Head of caudate nucleus (tissue), 42 donors: ENCODE measurements at regions of chr19 and their contacts with region 1.

Region 1: DNA sequence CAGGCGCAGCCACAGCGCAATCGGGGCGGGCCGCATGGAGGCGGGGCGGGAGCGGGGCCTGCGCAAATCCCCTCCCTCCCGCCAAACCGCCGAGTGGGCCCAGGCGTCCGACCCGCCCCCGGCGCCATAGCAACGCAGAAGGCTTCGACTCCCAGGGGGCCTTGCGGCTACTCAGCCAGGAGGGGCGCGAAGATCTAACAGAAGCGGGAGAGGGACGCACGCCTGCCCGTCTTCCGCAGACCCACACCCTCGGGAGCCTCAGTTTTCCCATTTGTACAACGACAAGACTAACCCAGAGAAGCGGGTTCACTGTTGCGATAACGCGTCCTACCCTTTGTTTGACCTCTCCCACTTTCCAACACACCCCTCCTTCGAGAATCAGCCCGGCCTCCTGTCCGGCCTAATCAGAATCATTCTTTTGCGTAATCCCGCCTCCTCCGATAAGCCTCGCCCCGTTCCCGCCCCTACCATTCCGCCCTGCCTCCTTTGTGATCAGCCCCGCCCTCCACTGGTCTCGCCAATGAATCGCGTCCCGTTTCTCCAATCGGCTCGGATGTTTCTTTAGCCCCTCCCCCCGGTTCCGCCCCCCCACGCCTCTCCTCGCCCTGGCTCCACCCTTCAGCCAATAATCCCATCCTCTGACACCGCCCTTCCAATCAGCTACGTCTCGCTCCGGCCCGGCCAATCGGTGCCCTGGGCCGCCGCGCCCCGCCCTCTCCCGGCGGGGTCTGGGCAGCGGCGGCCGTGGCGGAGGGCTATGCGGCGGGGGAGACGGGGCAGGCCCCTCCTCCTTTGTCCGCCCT is at the start of gene PCSK4:
- DNase-seq: peak; percentile 95 to 100 (median 99)

Region 2: DNA sequence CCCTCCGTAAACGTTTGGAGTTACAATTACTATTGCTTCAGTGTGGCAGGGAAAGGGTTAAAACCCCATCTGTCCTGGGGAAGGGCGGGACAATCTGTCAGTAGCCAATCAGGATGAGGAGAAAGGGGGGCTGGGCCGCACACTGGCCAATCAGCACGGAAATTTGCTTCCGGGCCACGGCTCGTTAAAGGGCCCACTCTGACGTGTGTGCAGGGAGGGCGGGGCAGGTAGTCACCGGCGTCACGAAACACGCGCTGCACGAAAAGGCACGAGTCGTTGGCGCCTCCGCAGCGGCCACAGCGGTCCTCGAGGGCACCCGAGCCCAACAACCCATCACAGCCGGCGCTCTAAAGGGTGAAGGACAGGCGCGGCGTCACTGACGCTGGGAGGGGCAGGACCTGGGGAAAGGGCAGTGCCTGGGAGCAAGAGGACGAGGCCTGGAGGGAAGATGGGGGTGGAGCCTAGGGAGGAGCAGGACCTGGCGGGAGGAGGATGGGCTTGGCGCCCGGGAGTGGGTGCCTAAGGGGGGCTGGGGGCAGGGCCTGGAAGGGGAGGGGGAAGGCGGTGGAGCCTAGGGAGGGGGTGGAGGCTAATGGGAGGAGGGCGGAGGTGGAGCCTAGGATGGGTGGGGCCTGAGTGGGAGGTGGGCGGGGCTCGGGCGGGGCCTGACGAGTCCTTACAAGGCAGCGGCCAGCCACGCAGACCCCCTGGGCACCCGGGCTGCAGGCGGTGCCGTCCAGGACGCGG is 17.4 kb after region 1 on chr19:
- intact Hi-C with region 1: loop called (anchors 2 kb)
- DNase-seq: peak; percentile 90 to 97 (median 94)